Naive thymus-derived CD4-positive, alpha-beta T cell (primary cell): ENCODE measurements at regions of chr11 and their contacts with region 1.

Region 1: DNA sequence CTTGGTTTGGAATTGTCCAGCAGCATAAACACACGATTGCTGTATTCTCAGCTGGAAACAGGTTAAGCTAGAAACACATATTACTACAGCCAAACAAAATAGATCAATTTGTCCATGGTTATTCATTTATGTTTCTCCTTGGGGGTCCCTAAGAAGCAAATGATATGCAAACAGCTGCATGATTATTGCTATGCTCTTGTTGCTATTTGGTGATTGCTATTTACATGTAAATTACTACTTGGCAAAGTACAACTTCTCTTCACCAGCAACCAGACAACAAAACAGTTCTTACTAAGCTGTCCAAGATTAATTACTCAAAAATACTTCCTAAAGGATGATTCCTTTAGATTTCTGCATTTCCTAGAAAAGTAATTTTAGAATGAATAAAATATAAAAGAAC is 567.9 kb upstream of the ARHGAP42 start:
- DNase-seq: no peak
- ATAC-seq: no peak
- H3K4me3 ChIP-seq: no peak overlapping the region
- H3K4me3 Mint-ChIP-seq: no peak overlapping the region
- H3K27ac ChIP-seq: no peak overlapping the region
- H3K27ac Mint-ChIP-seq: no peak overlapping the region
- H3K4me1 ChIP-seq: no peaks in the 10 kb centered on the region
- H3K4me1 Mint-ChIP-seq: no peaks in the 10 kb centered on the region
- H3K27me3 ChIP-seq: no peaks in the 10 kb centered on the region
- H3K27me3 Mint-ChIP-seq: no peaks in the 10 kb centered on the region

Region 2: GRCh38 chr11:100174881-100175280 is 55.7 kb after region 1 on chr11:
- CTCF ChIA-PET with region 1: no interaction called
- POLR2A ChIA-PET with region 1: no interaction called
- intact Hi-C with region 1: loop called in 1 of 2 experiments (anchors 10 kb)
- DNase-seq: no peak
- ATAC-seq: no peak
- H3K4me3 ChIP-seq: no peak overlapping the region
- H3K4me3 Mint-ChIP-seq: no peak overlapping the region
- H3K27ac ChIP-seq: no peak overlapping the region
- H3K27ac Mint-ChIP-seq: no peak overlapping the region
- H3K4me1 ChIP-seq: no peaks in the 10 kb centered on the region
- H3K4me1 Mint-ChIP-seq: no peaks in the 10 kb centered on the region
- H3K27me3 ChIP-seq: no peaks in the 10 kb centered on the region
- H3K27me3 Mint-ChIP-seq: no peaks in the 10 kb centered on the region